Activated CD4-positive, alpha-beta T cell treated with anti-CD3 and anti-CD28 coated beads, Interleukin-2, amount 10 ng/mL, durations not matched to agents 7 days and 5 days (primary cell): ENCODE measurements at regions of chr12 and their contacts with region 1.

Region 1: DNA sequence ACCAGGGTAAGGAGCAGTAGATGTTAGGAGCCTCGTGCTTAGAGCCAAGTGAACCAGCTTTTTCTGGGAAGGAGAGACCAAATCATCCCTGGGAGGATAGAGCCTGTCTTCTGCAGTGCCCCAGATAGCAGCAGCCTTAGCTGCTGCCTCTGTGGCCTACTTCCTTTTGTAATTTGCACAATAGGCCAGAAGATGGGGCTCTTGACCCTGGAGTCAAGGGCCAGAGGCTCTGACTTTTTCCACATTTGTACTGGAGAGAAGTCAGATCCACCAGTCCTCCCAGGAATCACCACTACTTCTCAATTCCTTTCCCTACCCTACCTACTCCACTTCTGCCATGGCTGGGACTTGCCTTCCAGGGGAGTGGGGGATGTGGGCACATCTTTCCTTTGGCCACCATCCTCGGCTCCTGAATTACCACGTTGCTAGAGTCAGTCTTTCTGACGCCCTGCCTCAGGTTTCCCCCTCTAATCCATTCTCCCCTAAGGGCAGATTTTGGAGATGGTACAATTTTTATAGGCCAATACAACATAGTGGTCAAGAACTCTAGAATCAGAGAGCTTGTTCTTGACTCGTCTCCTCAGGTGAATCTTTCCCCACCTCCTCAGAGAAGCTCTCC is 3.3 kb upstream of the SLC4A8 start:
- DNase-seq: peak; percentile 73
- H3K4me3 Mint-ChIP-seq: no peak overlapping the region
- H3K27ac Mint-ChIP-seq: no peak overlapping the region
- H3K4me1 Mint-ChIP-seq: peaks cover 23% of the 10 kb centered on the region
- H3K27me3 Mint-ChIP-seq: peaks cover 10% of the 10 kb centered on the region

Region 2: DNA sequence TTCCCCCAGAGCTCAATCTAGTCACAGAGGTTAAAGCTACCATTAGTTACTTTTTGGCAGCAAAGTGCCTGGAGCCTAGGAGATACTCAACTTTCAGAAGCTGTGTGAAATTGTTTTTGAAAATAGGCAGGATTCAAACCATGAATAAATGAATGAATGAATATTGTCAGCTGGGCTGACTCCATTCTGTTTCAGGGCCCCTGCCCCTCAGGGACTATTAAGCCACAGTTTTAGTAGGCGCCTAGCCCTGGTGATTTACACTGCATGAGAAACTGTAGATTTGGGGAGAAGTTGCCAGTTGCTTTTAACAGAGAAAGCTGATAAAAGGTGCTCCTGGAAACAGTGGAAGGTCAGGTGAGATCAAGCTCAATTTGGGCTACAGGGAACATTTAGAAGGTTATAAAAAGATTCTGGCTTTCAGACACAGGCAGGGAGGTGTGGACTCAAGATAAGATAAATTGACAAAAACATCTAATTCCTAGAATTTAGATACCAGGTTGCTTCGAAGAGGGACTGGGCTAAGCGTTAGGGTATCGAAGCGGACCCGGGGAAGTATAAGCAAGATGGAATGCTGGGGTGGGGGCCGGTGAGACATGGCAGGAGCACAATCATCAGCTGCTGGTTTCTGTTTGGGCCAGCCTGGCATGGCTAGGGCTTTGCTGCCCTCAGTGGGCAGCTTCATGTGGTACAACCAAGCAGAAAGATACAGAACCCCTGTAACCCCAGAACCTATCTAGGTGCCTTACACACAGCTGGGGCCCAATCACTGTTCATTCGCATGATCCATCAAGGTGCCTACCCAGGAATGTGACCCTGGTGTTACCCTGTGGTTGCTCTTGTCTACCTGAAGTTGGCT is 60.0 kb before region 1 on chr12:
- CTCF ChIA-PET with region 1: no interaction called
- POLR2A ChIA-PET with region 1: no interaction called
- DNase-seq: no peak
- H3K4me3 Mint-ChIP-seq: no peak overlapping the region
- H3K27ac Mint-ChIP-seq: peak overlapping the region; percentile 74
- H3K4me1 Mint-ChIP-seq: peaks cover 13% of the 10 kb centered on the region
- H3K27me3 Mint-ChIP-seq: no peaks in the 10 kb centered on the region

Region 3: DNA sequence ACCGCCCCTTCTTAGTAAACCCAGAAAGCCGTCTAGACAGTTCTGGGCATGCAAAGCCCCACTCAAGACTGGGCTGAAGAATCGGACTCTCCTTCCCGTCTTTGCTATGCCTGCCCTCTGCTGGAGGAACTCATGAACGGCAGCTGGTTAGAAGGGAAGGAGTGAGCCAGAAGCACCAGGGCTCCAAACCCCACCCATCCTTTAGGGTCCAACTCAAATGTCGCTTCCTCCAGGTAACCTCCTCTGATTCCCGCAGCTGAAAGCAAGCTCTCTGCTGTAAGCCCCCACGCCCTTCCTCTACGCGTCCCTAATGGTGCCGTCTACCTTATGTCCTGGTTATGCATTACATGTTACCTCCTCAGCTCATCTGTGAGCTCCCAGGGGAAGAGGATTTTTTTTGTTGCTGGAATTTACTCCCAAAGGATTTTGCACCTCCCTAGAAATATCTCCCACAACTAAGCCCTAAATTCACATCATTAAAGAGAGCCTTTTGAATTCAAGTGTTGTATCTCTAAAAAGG is 110.7 kb after region 1 on chr12:
- CTCF ChIA-PET with region 1: interaction called, 35 read pairs
- POLR2A ChIA-PET with region 1: interaction called, 4 read pairs
- DNase-seq: peak; percentile 85
- H3K4me3 Mint-ChIP-seq: no peak overlapping the region
- H3K27ac Mint-ChIP-seq: no peak overlapping the region
- H3K4me1 Mint-ChIP-seq: peaks cover 8% of the 10 kb centered on the region
- H3K27me3 Mint-ChIP-seq: peaks cover 14% of the 10 kb centered on the region